Endothelial cell of umbilical vein (primary cell): ENCODE measurements at regions of chr12 and their contacts with region 1.

Region 1: GRCh38 chr12:107093417-107094182 is at the start of gene CRY1:
- DNase-seq: peak; percentile 98
- H3K4me3 ChIP-seq: peak within 1 kb of the TSS; percentile 56 to 78 (median 71)
- H3K27ac ChIP-seq: peak within 1 kb of the TSS; percentile 94
- H3K4me1 ChIP-seq: peaks cover 20% of the 10 kb centered on the region
- H3K27me3 ChIP-seq: no peaks in the 10 kb centered on the region
- CTCF ChIP-seq: no peak
- POLR2A ChIP-seq: peak; percentile 69
- total RNA-seq, gene CRY1: 21.0 and 24.1 TPM in 2 replicates

Region 2: GRCh38 chr12:106302401-106303201 is 791.0 kb before region 1 on chr12 and contains the start of gene TCP11L2:
- CTCF ChIA-PET with region 1: no interaction called
- POLR2A ChIA-PET with region 1: no interaction called
- dilution Hi-C with region 1: no loop called
- intact Hi-C with region 1: loop called (anchors 2 kb)
- DNase-seq: peak; percentile 79
- H3K4me3 ChIP-seq: peak within 1 kb of the TSS; percentile 62 to 83 (median 73)
- H3K27ac ChIP-seq: peak within 1 kb of the TSS; percentile 98
- H3K4me1 ChIP-seq: peaks cover 14% of the 10 kb centered on the region
- H3K27me3 ChIP-seq: peaks cover 0 to 1% of the 10 kb centered on the region in 2 experiments
- CTCF ChIP-seq: no peak
- POLR2A ChIP-seq: no peak
- total RNA-seq, gene TCP11L2: 15.3 and 18.7 TPM in 2 replicates

Region 3: GRCh38 chr12:106774005-106774807 is 319.4 kb before region 1 on chr12 and contains the start of gene RIC8B:
- CTCF ChIA-PET with region 1: no interaction called
- POLR2A ChIA-PET with region 1: no interaction called
- dilution Hi-C with region 1: no loop called
- intact Hi-C with region 1: loop called (anchors 2 kb)
- DNase-seq: peak; percentile 99
- H3K4me3 ChIP-seq: peak within 1 kb of the TSS; percentile 52 to 84 (median 74)
- H3K27ac ChIP-seq: peak within 1 kb of the TSS; percentile 91
- H3K4me1 ChIP-seq: peaks cover 12% of the 10 kb centered on the region
- H3K27me3 ChIP-seq: no peaks in the 10 kb centered on the region
- CTCF ChIP-seq: peak in 1 of 2 donors; percentile 2
- POLR2A ChIP-seq: peak; percentile 91
- total RNA-seq, gene RIC8B: 13.7 and 16.5 TPM in 2 replicates

Region 4: DNA sequence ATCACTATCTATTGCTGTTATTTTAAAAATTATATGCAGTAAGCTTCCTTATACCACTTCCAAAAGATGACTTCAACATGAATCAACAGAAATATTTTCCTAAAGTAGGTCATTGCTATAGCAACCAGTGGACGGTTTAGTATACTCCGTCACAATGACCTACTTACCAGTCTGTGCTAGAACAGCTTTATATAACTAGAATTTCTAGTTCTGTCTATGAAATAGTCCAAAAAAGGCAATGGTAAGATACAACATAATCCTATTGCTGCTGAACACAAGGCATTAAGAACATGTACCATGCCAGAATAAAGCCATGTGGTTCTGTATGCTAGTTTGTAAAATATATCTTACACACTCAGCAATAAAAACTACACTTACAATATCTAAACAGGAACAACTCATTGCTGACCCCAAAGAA is 66.0 kb before region 1 on chr12:
- CTCF ChIA-PET with region 1: no interaction called
- POLR2A ChIA-PET with region 1: no interaction called
- dilution Hi-C with region 1: no loop called
- intact Hi-C with region 1: loop called (anchors 1 kb)
- DNase-seq: peak; percentile 95
- H3K4me3 ChIP-seq: no peak overlapping the region
- H3K27ac ChIP-seq: peak overlapping the region; percentile 81
- H3K4me1 ChIP-seq: peaks cover 17% of the 10 kb centered on the region
- H3K27me3 ChIP-seq: no peaks in the 10 kb centered on the region
- CTCF ChIP-seq: no peak
- POLR2A ChIP-seq: no peak

Region 5: DNA sequence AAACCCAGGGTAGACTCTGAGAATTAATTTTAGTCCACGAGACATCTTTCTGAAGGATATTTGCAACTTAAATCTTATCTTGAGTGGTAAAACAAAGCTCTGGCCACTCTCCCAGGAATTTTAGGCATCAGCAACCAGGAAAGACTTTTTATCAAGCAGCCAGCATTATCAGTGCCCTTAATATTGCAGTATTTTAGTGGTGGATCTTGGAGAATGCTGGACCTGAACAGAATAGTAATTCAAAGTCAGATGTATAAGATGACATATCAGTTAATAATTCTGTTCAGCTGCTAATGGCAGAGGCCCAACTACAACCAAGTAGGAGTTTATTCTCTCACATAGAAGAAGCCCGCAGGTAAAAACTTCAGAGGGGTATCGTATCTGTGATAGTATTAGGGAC is 58.7 kb after region 1 on chr12:
- CTCF ChIA-PET with region 1: no interaction called
- POLR2A ChIA-PET with region 1: no interaction called
- dilution Hi-C with region 1: no loop called
- intact Hi-C with region 1: no loop called
- DNase-seq: no peak
- H3K4me3 ChIP-seq: no peak overlapping the region
- H3K27ac ChIP-seq: no peak overlapping the region
- H3K4me1 ChIP-seq: no peaks in the 10 kb centered on the region
- H3K27me3 ChIP-seq: no peaks in the 10 kb centered on the region
- CTCF ChIP-seq: no peak
- POLR2A ChIP-seq: no peak

Region 6: DNA sequence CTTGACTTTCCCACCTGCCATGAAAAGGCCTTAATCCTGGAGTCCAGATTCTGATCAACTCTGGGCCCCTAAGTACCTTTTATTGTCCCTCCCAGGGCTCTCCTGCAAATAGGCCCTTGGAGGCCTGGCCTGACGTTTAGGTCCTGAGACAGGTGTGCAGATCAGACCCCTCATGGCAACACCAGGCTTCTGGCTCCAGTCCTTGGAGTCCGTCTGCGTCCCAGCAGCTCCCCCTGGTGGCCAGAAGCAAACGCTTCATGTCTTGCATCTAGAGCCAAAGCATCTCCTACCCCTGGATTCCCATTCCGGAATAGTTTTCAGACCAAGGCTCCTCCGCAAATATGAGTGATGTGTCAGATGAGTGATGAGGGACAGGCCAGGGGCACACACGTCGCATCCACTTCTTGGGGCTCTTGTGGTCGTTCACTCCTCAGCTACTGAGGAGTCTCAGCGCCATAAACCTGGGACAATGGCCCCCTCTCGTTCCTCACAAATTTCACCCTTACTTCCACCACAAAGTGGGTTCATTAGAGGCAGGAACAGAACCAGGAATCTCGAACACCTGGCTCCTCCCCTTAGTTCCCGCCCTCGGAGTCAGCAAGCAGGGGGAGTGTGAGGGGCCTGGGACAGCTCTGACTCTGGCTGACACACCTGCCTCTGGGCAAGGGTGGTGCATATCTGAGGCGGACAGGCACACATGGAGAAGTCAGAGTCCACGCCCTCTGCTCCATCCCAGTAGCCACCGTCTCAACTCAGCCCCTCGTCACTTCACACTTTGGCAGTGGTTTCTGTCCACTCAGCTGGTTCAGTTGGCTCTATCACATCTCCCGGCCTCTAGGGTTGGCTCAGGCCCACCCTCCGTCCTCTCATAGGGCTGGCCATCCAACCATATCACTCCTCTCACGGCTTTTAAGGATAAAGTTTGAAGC is 514.1 kb after region 1 on chr12:
- CTCF ChIA-PET with region 1: interaction called, 14 read pairs
- POLR2A ChIA-PET with region 1: no interaction called
- dilution Hi-C with region 1: no loop called
- intact Hi-C with region 1: no loop called
- DNase-seq: peak; percentile 62
- H3K4me3 ChIP-seq: no peak overlapping the region
- H3K27ac ChIP-seq: no peak overlapping the region
- H3K4me1 ChIP-seq: no peaks in the 10 kb centered on the region
- H3K27me3 ChIP-seq: no peaks in the 10 kb centered on the region
- CTCF ChIP-seq: peak; percentile 89 to 94
- POLR2A ChIP-seq: no peak

Region 7: DNA sequence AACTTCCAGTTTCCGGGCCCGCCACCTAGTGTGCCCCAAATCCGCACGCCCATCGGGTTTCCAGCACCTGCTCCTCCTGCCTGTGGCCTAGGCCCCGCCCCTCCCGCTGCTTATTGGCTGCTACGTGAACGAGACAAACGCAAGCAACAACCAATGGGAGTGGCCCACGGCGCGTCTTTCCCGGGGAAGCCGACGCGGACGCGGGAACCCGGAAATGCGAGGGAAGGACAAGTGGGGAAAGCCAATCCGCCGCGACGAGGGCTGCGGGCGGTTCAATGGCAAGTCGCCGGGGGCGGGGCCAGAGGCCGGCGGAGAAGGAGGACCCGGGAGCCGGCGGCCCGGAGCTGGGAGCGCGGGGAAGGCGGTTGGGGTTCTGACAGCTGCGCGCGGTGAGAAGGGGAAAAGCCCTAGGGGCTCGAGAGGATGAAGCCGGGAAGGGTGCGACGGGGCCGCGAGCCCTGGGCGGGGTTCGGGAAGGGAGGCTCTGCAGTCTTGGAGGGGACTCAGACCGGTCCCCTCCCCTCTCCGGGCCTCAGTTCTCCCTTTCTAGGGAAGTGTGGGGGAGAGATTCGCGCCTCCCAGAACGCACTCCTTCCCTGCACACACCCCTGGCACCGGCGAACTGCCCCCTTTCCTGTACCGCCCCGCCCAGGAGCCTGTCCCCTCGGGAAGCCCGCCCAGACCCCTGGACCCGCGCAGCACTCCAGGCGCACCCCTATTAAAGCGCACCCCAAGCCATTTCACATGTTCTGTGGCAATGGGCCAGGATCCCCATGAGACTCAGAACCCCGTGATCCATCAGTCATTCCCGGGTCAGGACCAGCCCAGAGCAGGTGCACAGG is 1421.6 kb after region 1 on chr12 and contains the start of gene FICD:
- CTCF ChIA-PET with region 1: no interaction called
- POLR2A ChIA-PET with region 1: no interaction called
- dilution Hi-C with region 1: no loop called
- intact Hi-C with region 1: loop called (anchors 10 kb)
- DNase-seq: peak; percentile 99
- H3K4me3 ChIP-seq: peak within 1 kb of the TSS; percentile 63 to 98 (median 73)
- H3K27ac ChIP-seq: peak within 1 kb of the TSS; percentile 52
- H3K4me1 ChIP-seq: peaks cover 7% of the 10 kb centered on the region
- H3K27me3 ChIP-seq: no peaks in the 10 kb centered on the region
- CTCF ChIP-seq: no peak
- POLR2A ChIP-seq: peak; percentile 50
- total RNA-seq, gene FICD: 6.0 and 6.1 TPM in 2 replicates